Right ventricle myocardium inferior (tissue), 1 donor: ENCODE measurements at regions of chr12 and their contacts with region 1.

Region 1: DNA sequence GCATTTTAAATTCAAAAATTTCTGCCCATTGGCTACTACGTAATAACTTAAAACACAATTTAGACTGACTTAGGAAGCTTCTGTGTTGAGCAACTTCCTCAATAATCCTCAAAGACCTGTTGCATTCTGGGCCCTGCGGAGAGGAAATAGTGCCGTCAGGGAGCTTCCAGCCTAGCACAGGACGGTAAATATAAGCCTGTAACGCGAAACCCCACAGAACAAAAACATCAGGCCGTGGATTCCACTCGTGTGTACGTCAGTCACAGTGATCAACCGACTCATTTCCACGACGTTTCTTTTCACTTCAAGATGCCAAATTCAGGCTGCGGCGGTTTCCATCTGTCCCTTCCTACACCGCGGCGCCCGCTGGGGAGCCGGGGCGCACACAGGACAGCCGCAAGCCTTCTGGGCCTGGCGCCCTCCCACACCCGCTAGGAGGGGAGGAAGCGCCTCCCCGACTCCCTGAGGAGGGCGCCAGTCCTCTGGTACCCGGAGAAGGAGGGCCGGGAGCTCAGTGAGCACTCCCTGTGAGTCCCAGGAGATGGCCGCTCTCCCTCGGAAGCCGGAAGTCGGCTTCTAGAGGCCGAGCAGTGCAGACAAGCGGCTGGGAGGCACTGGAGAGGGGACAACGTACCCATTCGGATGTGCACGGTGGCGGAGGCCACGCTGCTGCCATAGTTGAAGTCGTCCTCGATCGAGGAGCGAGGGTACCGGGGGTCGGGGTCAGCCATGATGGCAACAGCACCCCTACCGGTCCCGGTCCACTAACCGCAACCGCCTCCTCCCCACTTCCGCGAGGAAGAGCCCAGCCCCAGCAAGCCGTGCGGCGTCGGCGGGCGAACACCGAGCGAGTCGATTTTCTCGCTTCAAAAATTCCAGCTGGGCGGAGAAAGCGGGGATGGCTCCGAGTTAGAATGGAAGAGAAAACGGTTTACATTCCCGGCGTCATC is at the start of gene TMBIM4:
- DNase-seq: peak; percentile 93
- ATAC-seq: peak; percentile 97
- total RNA-seq, gene TMBIM4: 67.6 TPM

Region 2: DNA sequence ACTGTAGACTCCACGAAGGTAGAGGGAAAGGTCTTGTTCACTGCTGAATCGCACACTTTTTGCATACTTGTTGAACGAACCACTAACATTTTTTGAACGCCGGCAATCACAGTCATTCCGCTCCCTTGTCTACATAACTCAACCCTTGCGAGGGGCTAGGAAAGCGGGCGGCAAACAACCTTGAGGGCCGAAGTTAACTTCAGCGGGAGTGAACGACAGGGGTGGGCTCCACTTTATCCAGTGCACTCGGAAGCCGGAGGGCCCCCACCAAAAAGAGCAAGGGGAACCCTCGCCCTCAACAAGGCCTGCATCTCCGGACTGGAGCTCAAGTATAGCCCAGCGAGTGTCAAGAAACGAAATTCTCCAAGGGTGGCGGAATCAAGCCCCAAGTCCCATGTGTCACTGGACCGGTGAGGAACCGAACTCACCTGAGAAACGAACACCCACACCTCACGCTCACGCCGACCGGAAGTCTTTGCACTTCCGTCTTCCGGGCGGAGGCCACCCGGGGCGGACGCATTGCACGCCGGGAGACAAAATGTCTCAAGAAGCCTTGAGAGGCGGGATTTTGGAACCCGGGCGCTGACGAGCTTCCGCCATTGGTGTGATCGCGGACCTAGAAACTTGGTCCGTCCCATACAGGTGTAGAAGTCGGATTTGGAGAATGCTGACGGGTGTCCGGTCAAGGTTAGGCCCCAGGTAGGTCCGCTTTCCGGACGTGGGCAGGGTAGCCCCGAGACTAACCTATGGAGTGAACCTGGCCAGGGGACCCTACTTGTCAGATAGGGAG is 39.0 kb before region 1 on chr12 and contains the start of gene LLPH:
- intact Hi-C with region 1: loop called (anchors 5 kb)
- DNase-seq: peak; percentile 96
- ATAC-seq: peak; percentile 97
- total RNA-seq, gene LLPH: 18.1 TPM

Region 3: GRCh38 chr12:66188584-66189485 is 19.3 kb after region 1 on chr12 and contains the start of gene IRAK3:
- intact Hi-C with region 1: loop called (anchors 1 kb)
- DNase-seq: peak; percentile 96
- ATAC-seq: peak; percentile 97
- total RNA-seq, gene IRAK3: 5.0 TPM